Heart left ventricle (tissue), 16 donors: ENCODE measurements at regions of chr20 and their contacts with region 1.

Region 1: GRCh38 chr20:35454881-35455609 is at the start of gene CEP250:
- DNase-seq: peak; percentile 93 to 97 (median 95)
- ATAC-seq: peak; percentile 98 to 99 (median 99)
- H3K4me3 ChIP-seq: peak within 1 kb of the TSS; percentile 50 to 99 (median 88)
- H3K27ac ChIP-seq: peak within 1 kb of the TSS; percentile 88 to 97 (median 94)
- H3K4me1 ChIP-seq: peaks cover 0 to 18% (median 8%) of the 10 kb centered on the region in 12 donors
- H3K27me3 ChIP-seq: no peaks in the 10 kb centered on the region
- CTCF ChIP-seq: no peak
- POLR2A ChIP-seq: no peak
- total RNA-seq, gene CEP250: 11.6 to 21.4 (median 15.4) TPM

Region 2: DNA sequence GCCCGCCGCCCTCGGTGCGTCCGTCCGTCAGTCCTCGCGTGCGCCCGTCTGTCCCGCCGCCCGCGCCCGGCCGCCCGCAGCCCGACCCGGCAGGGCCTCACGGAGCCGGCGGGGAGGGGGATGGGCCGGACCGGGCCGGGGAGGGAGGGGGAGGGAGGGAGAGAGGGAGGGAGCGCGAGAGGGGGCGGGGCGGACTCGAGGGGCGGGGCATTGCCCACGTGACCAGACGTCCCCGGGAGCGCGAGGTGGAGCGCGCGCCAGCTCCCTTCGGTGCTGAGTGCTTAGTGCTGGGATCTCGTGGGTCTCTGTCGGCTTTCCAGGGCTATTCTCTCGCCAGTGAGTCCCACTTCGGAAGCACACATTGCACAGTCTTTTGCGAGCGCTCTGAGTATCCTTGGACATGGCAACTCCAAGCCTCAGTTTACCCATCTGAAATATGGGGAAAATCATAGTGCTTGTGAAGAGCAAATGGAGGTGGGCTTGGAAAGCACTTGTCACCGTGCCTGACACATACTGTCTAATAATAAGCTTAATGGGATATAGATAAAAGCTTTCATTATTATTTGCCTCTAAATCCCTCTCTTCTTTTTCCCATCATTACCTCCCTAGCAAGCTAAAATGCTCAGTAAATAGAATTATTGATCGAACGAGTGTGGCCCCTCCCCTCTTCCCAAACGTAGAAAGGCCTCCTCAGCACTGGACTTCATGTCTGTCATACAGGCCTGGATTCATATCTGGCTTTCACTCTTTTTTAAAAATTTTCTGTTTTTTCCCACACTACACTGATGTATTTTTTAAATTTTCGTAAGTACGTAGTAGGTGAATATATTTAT is 629.3 kb before region 1 on chr20 and contains the start of gene NCOA6:
- intact Hi-C with region 1: loop called in 1 of 10 experiments (anchors 10 kb)
- DNase-seq: peak; percentile 88 to 94 (median 92)
- ATAC-seq: peak; percentile 81 to 93 (median 84)
- H3K4me3 ChIP-seq: peak within 1 kb of the TSS; percentile 72 to 99 (median 88)
- H3K27ac ChIP-seq: peak within 1 kb of the TSS; percentile 89 to 97 (median 91)
- H3K4me1 ChIP-seq: peaks cover 3 to 39% (median 30%) of the 10 kb centered on the region in 12 donors
- H3K27me3 ChIP-seq: no peaks in the 10 kb centered on the region
- CTCF ChIP-seq: no peak
- POLR2A ChIP-seq: no peak
- total RNA-seq, gene NCOA6: 13.0 to 34.0 (median 19.9) TPM

Region 3: DNA sequence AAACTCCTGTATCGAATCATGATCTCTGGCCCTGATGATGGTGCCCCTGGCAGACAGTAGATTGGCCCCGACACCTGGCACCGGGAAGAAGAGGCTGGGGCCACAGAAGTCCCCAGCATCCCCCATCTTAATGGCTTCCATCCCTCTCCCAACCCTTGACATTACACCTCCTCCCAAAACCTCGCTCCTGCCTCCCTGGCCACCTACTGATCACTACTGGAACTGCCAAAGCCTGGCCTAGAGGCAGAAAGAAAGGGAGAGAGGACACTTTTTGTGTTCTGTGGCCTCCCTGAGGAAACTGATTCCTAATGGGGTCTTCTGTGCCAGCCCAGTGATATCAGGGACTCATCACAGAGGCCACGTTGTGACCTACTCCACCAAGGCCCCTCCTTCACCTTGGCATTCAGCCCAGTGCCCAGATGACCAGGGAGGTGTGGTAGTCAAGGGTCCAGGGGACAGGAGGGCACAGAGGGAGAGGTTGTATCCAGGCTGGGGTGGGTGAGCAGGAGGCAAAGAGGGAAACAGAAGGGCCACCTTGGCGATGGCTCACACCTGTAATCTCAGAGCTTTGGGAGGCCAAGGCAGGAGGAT is 68.3 kb after region 1 on chr20:
- intact Hi-C with region 1: no loop called
- DNase-seq: no peak
- ATAC-seq: no peak
- H3K4me3 ChIP-seq: no peak overlapping the region
- H3K27ac ChIP-seq: no peak overlapping the region
- H3K4me1 ChIP-seq: no peaks in the 10 kb centered on the region
- H3K27me3 ChIP-seq: no peaks in the 10 kb centered on the region
- CTCF ChIP-seq: peak in 10 of 12 donors; percentile 19 to 48 (median 32)
- POLR2A ChIP-seq: no peak